CD4-positive, alpha-beta memory T cell (primary cell): ENCODE measurements at regions of chr6 and their contacts with region 1.

Region 1: GRCh38 chr6:125314019-125314581 is 12.3 kb upstream of the HDDC2 start:
- DNase-seq: peak in 2 of 5 donors; percentile 31 to 36
- H3K4me3 ChIP-seq: no peak overlapping the region
- H3K4me3 Mint-ChIP-seq: no peak overlapping the region
- H3K27ac ChIP-seq: no peak overlapping the region
- H3K27ac Mint-ChIP-seq: no peak overlapping the region
- H3K4me1 ChIP-seq: no peaks in the 10 kb centered on the region
- H3K4me1 Mint-ChIP-seq: peaks cover 0 to 2% (median 0%) of the 10 kb centered on the region in 4 donors
- H3K27me3 ChIP-seq: peaks cover 7% of the 10 kb centered on the region
- H3K27me3 Mint-ChIP-seq: peaks cover 6 to 18% of the 10 kb centered on the region in 2 donors

Region 2: DNA sequence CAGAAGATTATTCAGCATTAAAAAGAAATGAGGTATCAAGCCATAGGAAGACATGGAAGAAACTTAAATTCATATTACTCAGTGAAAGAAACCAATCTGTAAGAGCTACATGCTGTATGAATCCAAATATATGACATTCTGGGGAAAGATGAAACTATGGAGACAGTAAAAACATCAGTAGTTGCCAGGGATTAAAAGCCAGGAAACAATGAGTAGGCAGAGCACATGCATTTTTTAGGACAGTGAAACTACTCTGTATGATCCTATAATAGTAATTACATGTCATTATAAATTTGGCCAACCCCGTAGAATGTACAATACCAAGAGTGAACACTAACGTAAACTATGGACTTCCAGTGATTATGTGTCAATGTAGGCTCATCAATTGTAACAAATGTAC is 444.7 kb before region 1 on chr6:
- CTCF ChIA-PET with region 1: no interaction called
- POLR2A ChIA-PET with region 1: no interaction called
- intact Hi-C with region 1: no loop called
- DNase-seq: no peak
- H3K4me3 ChIP-seq: no peak overlapping the region
- H3K4me3 Mint-ChIP-seq: no peak overlapping the region
- H3K27ac ChIP-seq: no peak overlapping the region
- H3K27ac Mint-ChIP-seq: no peak overlapping the region
- H3K4me1 ChIP-seq: no peaks in the 10 kb centered on the region
- H3K4me1 Mint-ChIP-seq: no peaks in the 10 kb centered on the region
- H3K27me3 ChIP-seq: no peaks in the 10 kb centered on the region
- H3K27me3 Mint-ChIP-seq: peaks cover 0 to 5% of the 10 kb centered on the region in 2 donors

Region 3: GRCh38 chr6:125301435-125302391 is 12.4 kb before region 1 on chr6 and contains the start of gene HDDC2:
- CTCF ChIA-PET with region 1: interaction called, 36 read pairs
- POLR2A ChIA-PET with region 1: interaction called, 3 read pairs
- intact Hi-C with region 1: no loop called
- DNase-seq: peak in 4 of 5 donors; percentile 32 to 43 (median 37)
- H3K4me3 ChIP-seq: peak within 1 kb of the TSS; percentile 44 to 62
- H3K4me3 Mint-ChIP-seq: peak within 1 kb of the TSS; percentile 82 to 97 (median 92)
- H3K27ac ChIP-seq: peak within 1 kb of the TSS; percentile 62
- H3K27ac Mint-ChIP-seq: peak within 1 kb of the TSS; percentile 78 to 97 (median 94)
- H3K4me1 ChIP-seq: peaks cover 47% of the 10 kb centered on the region
- H3K4me1 Mint-ChIP-seq: peaks cover 44 to 59% (median 54%) of the 10 kb centered on the region in 4 donors
- H3K27me3 ChIP-seq: no peaks in the 10 kb centered on the region
- H3K27me3 Mint-ChIP-seq: no peaks in the 10 kb centered on the region
- total RNA-seq, gene HDDC2: 49.5 to 53.5 TPM

Region 4: GRCh38 chr6:125598422-125598821 is 284.3 kb after region 1 on chr6:
- CTCF ChIA-PET with region 1: no interaction called
- POLR2A ChIA-PET with region 1: no interaction called
- intact Hi-C with region 1: no loop called
- DNase-seq: no peak
- H3K4me3 ChIP-seq: no peak overlapping the region
- H3K4me3 Mint-ChIP-seq: no peak overlapping the region
- H3K27ac ChIP-seq: no peak overlapping the region
- H3K27ac Mint-ChIP-seq: no peak overlapping the region
- H3K4me1 ChIP-seq: no peaks in the 10 kb centered on the region
- H3K4me1 Mint-ChIP-seq: no peaks in the 10 kb centered on the region
- H3K27me3 ChIP-seq: no peaks in the 10 kb centered on the region
- H3K27me3 Mint-ChIP-seq: peaks cover 9 to 11% of the 10 kb centered on the region in 2 donors

Region 5: GRCh38 chr6:125749173-125749864 is 435.2 kb after region 1 on chr6 and contains the start of gene HEY2:
- CTCF ChIA-PET with region 1: interaction called, 258 read pairs
- POLR2A ChIA-PET with region 1: interaction called, 4 read pairs
- intact Hi-C with region 1: loop called (anchors 1 kb)
- DNase-seq: peak; percentile 69 to 79 (median 75)
- H3K4me3 ChIP-seq: peak within 1 kb of the TSS; percentile 30 to 56
- H3K4me3 Mint-ChIP-seq: peak within 1 kb of the TSS; percentile 88 to 95 (median 91)
- H3K27ac ChIP-seq: no peak within 1 kb of the TSS
- H3K27ac Mint-ChIP-seq: peak within 1 kb of the TSS; percentile 57 to 92 (median 80)
- H3K4me1 ChIP-seq: peaks cover 41% of the 10 kb centered on the region
- H3K4me1 Mint-ChIP-seq: peaks cover 21 to 43% (median 27%) of the 10 kb centered on the region in 4 donors
- H3K27me3 ChIP-seq: peaks cover 57% of the 10 kb centered on the region
- H3K27me3 Mint-ChIP-seq: peaks cover 41 to 42% of the 10 kb centered on the region in 2 donors
- total RNA-seq, gene HEY2: 0.14 TPM in 1 of 2 experiments, not detected in the other

Region 6: GRCh38 chr6:125764121-125764671 is 450.1 kb after region 1 on chr6:
- CTCF ChIA-PET with region 1: interaction called, 258 read pairs
- POLR2A ChIA-PET with region 1: interaction called, 3 read pairs
- intact Hi-C with region 1: loop called (anchors 1 kb)
- DNase-seq: no peak
- H3K4me3 ChIP-seq: no peak overlapping the region
- H3K4me3 Mint-ChIP-seq: no peak overlapping the region
- H3K27ac ChIP-seq: no peak overlapping the region
- H3K27ac Mint-ChIP-seq: no peak overlapping the region
- H3K4me1 ChIP-seq: no peaks in the 10 kb centered on the region
- H3K4me1 Mint-ChIP-seq: peaks cover 0 to 5% (median 0%) of the 10 kb centered on the region in 4 donors
- H3K27me3 ChIP-seq: peaks cover 4% of the 10 kb centered on the region
- H3K27me3 Mint-ChIP-seq: peaks cover 36 to 45% of the 10 kb centered on the region in 2 donors

Region 7: GRCh38 chr6:125773387-125774341 is 459.6 kb after region 1 on chr6:
- CTCF ChIA-PET with region 1: interaction called, 49 read pairs
- POLR2A ChIA-PET with region 1: no interaction called
- intact Hi-C with region 1: loop called (anchors 1 kb)
- DNase-seq: no peak
- H3K4me3 ChIP-seq: no peak overlapping the region
- H3K4me3 Mint-ChIP-seq: no peak overlapping the region
- H3K27ac ChIP-seq: no peak overlapping the region
- H3K27ac Mint-ChIP-seq: no peak overlapping the region
- H3K4me1 ChIP-seq: no peaks in the 10 kb centered on the region
- H3K4me1 Mint-ChIP-seq: peaks cover 6 to 9% (median 7%) of the 10 kb centered on the region in 4 donors
- H3K27me3 ChIP-seq: no peaks in the 10 kb centered on the region
- H3K27me3 Mint-ChIP-seq: peaks cover 4 to 7% of the 10 kb centered on the region in 2 donors

Region 8: DNA sequence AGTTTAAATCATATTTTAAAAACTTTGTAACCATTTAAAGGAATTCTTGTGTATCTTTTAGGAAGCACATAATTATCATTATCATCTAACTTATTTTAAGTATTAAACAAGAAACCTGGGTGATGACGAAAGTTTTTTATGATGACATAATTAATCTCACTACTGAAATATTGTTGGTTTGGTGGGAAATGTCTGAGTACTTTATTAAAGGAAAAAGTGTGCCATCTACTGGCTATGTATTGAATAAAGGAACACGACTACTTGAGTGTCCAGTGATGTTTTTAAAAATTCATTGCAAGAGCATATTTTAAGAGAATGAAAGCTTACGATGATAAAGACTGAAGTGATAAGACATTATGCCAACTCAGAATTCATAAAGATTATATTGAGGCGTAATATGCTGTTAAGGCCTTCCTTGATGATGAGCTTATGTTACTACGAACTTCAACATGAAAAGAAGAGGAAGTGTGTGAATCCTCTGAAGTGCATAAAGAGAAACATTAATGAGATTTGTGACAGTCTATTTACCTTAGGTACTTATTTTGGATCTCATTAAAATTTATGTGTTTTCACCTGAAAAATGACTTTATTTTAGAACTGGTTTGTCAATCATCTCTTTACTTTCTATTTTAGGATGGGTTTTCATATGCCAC is 660.2 kb after region 1 on chr6:
- CTCF ChIA-PET with region 1: interaction called, 11 read pairs
- POLR2A ChIA-PET with region 1: no interaction called
- intact Hi-C with region 1: loop called (anchors 1 kb)
- DNase-seq: peak in 4 of 5 donors; percentile 43 to 53 (median 46)
- H3K4me3 ChIP-seq: no peak overlapping the region
- H3K4me3 Mint-ChIP-seq: no peak overlapping the region
- H3K27ac ChIP-seq: no peak overlapping the region
- H3K27ac Mint-ChIP-seq: peak overlapping the region in 3 of 7 donors; percentile 14 to 33 (median 23)
- H3K4me1 ChIP-seq: no peaks in the 10 kb centered on the region
- H3K4me1 Mint-ChIP-seq: peaks cover 0 to 10% (median 9%) of the 10 kb centered on the region in 4 donors
- H3K27me3 ChIP-seq: no peaks in the 10 kb centered on the region
- H3K27me3 Mint-ChIP-seq: no peaks in the 10 kb centered on the region

Region 9: DNA sequence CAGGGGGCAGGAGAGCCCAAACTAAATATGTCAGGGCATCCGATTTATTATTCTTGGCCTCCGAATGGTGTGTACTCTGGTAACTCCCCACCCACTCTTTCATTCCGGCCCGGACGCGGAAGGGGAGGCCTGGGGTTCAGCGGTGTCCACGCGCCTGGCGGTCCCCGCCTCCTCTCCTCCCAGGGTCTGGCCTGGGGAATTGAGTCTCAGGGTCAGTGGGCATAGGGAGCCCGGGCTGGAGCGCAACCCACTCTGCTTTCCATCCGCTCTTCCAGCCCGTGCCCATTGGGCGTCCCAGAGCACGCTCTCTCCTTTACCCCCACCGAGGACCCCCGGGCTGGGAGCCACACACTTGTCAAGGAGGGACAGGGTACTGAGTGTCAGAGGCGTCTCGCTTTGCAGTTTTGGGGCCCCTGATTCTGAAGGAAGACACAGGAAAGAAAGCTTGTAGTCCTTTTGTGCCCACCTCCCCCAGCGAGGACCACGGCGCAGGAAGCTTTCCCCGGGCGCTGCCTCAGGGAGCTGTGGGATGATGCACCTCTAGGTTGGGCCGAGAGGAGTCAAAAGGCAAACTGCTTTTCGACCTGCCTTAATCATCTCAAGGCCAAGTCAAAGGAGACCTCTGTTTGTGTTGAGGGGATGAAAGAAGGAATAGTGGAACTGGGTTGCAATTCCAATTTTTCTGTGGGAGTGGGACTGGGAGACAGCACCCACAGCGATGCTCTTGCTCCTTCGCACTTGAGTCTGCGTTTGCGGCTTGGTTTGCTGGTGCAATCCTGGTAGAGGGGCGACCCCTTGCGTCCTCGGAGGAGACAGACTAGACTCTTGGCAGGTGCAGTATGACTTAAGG is 1806.9 kb after region 1 on chr6:
- CTCF ChIA-PET with region 1: no interaction called
- POLR2A ChIA-PET with region 1: no interaction called
- intact Hi-C with region 1: loop called (anchors 2 kb)
- DNase-seq: peak; percentile 24 to 39 (median 35)
- H3K4me3 ChIP-seq: no peak overlapping the region
- H3K4me3 Mint-ChIP-seq: peak overlapping the region in 6 of 8 donors; percentile 14 to 71 (median 48)
- H3K27ac ChIP-seq: no peak overlapping the region
- H3K27ac Mint-ChIP-seq: no peak overlapping the region
- H3K4me1 ChIP-seq: peaks cover 14% of the 10 kb centered on the region
- H3K4me1 Mint-ChIP-seq: peaks cover 13 to 35% (median 23%) of the 10 kb centered on the region in 4 donors
- H3K27me3 ChIP-seq: peaks cover 16% of the 10 kb centered on the region
- H3K27me3 Mint-ChIP-seq: peaks cover 39 to 44% of the 10 kb centered on the region in 2 donors